ENCODE measurements at regions of chr10 and their contacts with region 1.

Region 1: DNA sequence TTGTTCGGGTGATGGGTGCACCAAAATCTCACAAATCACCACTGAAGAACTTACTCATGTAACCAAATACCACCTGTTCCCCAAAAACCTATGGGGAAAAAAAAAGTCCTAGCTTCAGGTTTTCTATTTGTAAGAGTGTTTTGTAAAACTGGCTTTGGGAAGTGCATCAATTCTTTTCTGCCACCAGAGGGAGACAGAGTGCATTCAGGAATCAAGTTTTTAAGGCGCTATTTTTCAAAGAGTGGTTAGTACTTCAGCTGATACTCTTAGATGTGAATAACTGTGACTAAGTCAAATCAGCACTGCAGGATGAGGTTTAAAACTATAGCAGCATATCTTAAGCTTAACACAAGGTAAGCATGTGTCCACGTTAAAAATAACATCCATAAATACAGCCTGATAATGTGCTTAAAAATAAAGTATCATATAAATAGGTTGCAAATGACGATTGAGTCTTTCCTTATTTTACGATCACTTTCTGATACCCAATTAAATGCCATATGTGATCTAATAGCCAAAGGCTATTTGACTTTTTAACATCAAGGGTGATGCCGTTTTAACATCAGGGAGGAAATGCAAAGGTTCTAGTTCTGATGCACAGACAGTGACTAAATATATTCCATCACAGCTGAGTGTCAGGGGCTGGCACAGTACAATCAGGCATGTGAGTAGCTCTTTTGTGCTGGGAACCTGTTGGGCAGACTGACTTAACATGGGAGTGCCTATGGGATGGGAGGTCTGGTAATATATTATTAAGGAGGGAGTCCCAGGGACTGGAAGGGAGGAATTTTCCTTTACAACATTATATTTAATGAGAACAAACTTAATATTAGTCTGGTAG is 10.6 kb upstream of the LYZL2 start:
- DNase-seq: no peak
- H3K4me3 ChIP-seq: no peak overlapping the region
- H3K27ac ChIP-seq: no peak overlapping the region
- H3K4me1 ChIP-seq: peaks cover 0 to 7% (median 3%) of the 10 kb centered on the region in 4 experiments; a peak in 3 of 7 replicates
- H3K27me3 ChIP-seq: no peaks in the 10 kb centered on the region
- CTCF ChIP-seq: peak in 2 of 3 experiments; percentile 66 to 77; a peak in 3 of 4 replicates
- EP300 ChIP-seq: no peak
- POLR2A ChIP-seq: no peak
- RAD21 ChIP-seq: peak; percentile 49 to 59

Region 2: DNA sequence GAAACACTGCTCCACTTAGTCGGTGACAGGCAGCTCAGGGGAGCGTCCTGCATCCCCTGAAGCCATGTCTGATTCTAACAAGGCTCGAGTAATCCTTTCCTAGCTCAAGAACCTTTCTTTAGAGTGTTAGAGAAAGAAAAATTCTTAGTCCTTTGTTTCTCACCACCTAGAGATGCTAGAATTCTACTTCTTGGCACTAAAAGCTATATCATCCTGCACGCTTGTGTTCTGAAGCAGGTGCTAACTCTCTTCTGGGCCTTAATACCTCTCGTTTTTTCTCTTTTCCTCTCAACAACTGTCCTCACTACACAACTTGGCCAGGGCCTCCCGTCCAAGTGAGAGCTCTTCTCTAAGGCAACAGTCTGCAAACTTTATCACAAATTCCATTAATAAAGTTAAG is 10.5 kb before region 1 on chr10 and contains the start of gene LYZL2:
- CTCF ChIA-PET with region 1: interaction called, 19 read pairs
- POLR2A ChIA-PET with region 1: no interaction called
- DNase-seq: no peak
- H3K4me3 ChIP-seq: no peak within 1 kb of the TSS
- H3K27ac ChIP-seq: no peak within 1 kb of the TSS
- H3K4me1 ChIP-seq: no peaks in the 10 kb centered on the region
- H3K27me3 ChIP-seq: no peaks in the 10 kb centered on the region
- CTCF ChIP-seq: no peak
- EP300 ChIP-seq: no peak
- POLR2A ChIP-seq: no peak
- RAD21 ChIP-seq: no peak
- total RNA-seq, gene LYZL2: not detected in 2 replicates

Region 3: GRCh38 chr10:30656233-30656632 is 16.1 kb after region 1 on chr10:
- CTCF ChIA-PET with region 1: interaction called, 15 read pairs
- POLR2A ChIA-PET with region 1: no interaction called
- DNase-seq: no peak
- H3K4me3 ChIP-seq: no peak overlapping the region
- H3K27ac ChIP-seq: no peak overlapping the region
- H3K4me1 ChIP-seq: peaks cover 0 to 3% (median 0%) of the 10 kb centered on the region in 4 experiments; a peak in 2 of 7 replicates
- H3K27me3 ChIP-seq: no peaks in the 10 kb centered on the region
- CTCF ChIP-seq: no peak
- EP300 ChIP-seq: no peak
- POLR2A ChIP-seq: no peak
- RAD21 ChIP-seq: no peak

Region 4: DNA sequence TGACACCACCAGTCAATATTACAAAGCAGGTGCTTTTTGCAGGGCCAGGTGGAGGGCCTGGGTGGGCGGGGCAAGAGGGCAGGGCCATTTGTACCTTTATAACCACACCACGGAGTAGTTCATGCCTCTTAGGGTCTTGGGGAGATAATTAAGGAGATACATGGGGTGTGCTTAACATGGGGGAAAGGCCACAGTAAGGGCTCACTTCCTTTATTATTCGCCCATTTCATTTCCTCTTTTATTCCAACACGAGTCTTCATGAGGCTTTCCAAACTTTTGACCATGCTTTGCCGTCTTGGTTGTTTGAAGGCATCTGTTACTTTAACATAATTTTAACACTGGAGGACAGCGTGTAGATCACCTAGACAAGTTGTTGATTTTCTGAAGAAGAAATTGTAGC is 22.6 kb after region 1 on chr10:
- CTCF ChIA-PET with region 1: interaction called, 15 read pairs
- POLR2A ChIA-PET with region 1: no interaction called
- DNase-seq: no peak
- H3K4me3 ChIP-seq: no peak overlapping the region
- H3K27ac ChIP-seq: no peak overlapping the region
- H3K4me1 ChIP-seq: peaks cover 0 to 5% (median under 1%) of the 10 kb centered on the region in 4 experiments; a peak in 2 of 7 replicates
- H3K27me3 ChIP-seq: no peaks in the 10 kb centered on the region; a peak in 1 of 7 replicates
- CTCF ChIP-seq: no peak
- EP300 ChIP-seq: no peak
- POLR2A ChIP-seq: no peak
- RAD21 ChIP-seq: no peak

Region 5: DNA sequence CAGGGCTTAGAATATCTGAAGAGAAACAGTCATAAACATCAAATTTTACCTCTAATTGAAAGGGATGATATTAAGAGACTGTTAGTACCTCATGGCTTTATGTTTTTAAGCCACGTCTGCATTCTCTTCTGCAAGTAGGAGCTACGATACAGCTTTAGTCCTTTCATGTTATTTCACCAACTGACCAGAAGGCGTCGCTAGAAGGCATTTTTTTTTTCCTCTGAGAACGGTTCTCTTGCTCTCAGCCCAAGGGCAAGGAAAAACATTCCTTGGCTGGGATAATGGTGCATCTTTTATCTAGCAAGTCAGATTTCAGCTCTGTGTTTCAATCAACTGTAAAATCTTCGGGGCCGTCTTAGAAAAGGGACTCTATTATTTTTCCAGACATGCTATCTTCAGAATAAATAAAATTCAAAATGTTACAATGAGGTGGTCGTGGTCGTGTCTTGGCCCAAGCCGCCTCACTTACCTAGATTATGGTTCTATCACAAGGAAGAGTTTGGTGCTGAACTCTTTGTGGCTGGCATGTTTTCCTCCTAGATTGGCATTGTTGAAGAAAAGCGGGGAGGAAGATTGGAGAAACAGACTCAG is 31.0 kb after region 1 on chr10:
- CTCF ChIA-PET with region 1: interaction called, 20 read pairs
- POLR2A ChIA-PET with region 1: no interaction called
- DNase-seq: peak in 1 of 2 experiments; percentile 19
- H3K4me3 ChIP-seq: no peak overlapping the region
- H3K27ac ChIP-seq: no peak overlapping the region
- H3K4me1 ChIP-seq: peaks cover 0 to 5% (median 0%) of the 10 kb centered on the region in 4 experiments; a peak in 1 of 7 replicates
- H3K27me3 ChIP-seq: no peaks in the 10 kb centered on the region; a peak in 1 of 7 replicates
- CTCF ChIP-seq: peak in 2 of 3 experiments; percentile 64 to 73; a peak in 3 of 4 replicates
- EP300 ChIP-seq: no peak
- POLR2A ChIP-seq: no peak
- RAD21 ChIP-seq: peak; percentile 51 to 66

Region 6: DNA sequence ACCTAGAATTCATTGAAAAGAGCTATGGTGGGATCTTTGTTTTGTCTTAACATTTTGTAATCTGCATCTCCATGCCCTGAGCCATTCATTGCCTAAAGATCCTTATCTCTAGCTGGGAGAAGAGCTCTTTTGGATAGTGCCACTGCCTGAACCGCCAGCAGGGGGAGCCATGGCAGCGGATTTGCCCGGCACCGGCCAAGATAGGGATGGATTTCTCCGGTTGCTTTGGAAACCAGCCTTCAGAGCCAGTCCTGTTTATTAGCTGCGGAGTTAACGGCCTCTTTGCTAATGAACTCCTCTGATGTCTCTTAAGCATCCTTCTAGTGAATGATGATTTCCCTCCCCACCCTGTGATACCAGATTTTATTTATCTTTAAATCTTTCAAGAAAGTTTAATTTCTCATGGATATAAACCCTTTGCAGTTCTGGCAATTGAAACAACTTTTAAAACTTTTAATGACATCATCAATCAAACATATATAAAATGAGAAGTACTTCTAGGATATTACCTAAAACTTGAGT is 47.6 kb after region 1 on chr10:
- CTCF ChIA-PET with region 1: interaction called, 12 read pairs
- POLR2A ChIA-PET with region 1: no interaction called
- DNase-seq: peak; percentile 73 to 97
- H3K4me3 ChIP-seq: no peak overlapping the region
- H3K27ac ChIP-seq: no peak overlapping the region
- H3K4me1 ChIP-seq: peaks cover 0 to 2% (median 0%) of the 10 kb centered on the region in 4 experiments; a peak in 1 of 7 replicates
- H3K27me3 ChIP-seq: no peaks in the 10 kb centered on the region
- CTCF ChIP-seq: peak; percentile 76 to 94 (median 82)
- EP300 ChIP-seq: no peak
- POLR2A ChIP-seq: no peak
- RAD21 ChIP-seq: peak; percentile 82 to 86

Region 7: GRCh38 chr10:30742471-30742870 is 102.3 kb after region 1 on chr10:
- CTCF ChIA-PET with region 1: no interaction called
- POLR2A ChIA-PET with region 1: no interaction called
- DNase-seq: no peak
- H3K4me3 ChIP-seq: no peak overlapping the region
- H3K27ac ChIP-seq: no peak overlapping the region
- H3K4me1 ChIP-seq: no peaks in the 10 kb centered on the region
- H3K27me3 ChIP-seq: no peaks in the 10 kb centered on the region
- CTCF ChIP-seq: no peak
- EP300 ChIP-seq: no peak
- POLR2A ChIP-seq: no peak
- RAD21 ChIP-seq: no peak

Measured in H1 (cell line).